Calu3 (cell line): ENCODE measurements at regions of chr6 and their contacts with region 1.

Region 1: GRCh38 chr6:133644892-133645619 is 243.9 kb upstream of the TCF21 start:
- DNase-seq: peak; percentile 4
- H3K4me3 Mint-ChIP-seq: no peak overlapping the region
- H3K27ac Mint-ChIP-seq: peak overlapping the region; percentile 54
- H3K4me1 Mint-ChIP-seq: peaks cover 24% of the 10 kb centered on the region
- H3K27me3 Mint-ChIP-seq: no peaks in the 10 kb centered on the region
- CTCF ChIP-seq: no peak

Region 2: DNA sequence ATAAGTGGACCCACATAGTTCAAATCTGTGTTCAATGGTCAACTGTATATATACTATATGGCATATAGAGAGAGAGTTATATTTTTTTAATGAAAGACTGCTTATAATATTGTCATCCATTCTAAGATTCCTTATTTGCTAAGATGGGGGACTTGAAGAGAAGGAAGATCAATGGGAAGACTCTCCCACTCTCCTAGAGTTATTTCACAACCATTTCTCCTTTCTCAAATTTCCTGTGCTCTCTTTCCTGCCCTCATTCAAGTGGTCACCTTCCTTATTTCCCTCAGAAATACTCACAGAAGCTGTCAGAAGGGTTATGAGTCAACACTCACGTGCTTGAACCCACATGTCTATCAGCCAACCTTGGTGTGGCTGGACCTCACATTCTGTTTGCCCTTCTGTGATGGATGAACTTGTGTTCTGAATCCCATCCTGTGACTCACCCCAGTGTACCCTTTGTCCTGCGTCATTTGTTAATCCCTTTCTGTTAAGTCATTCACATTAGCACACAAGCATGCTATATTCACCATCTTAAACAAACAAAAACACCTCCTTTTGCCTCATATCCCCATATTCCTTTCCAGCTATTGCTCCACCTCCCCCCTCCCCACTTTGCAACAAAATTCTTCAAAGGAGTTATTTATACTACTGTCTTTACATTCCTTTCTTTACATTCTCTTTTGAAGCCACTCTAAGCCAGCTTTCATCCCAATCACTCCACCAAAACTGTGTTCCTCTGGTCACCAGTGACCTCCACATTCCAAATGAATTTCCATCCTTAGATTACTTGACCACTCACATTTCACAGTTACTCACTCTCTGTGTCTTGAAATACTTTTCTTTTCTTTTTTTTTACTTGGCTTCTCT is 35.4 kb before region 1 on chr6:
- CTCF ChIA-PET with region 1: no interaction called
- intact Hi-C with region 1: no loop called
- DNase-seq: peak; percentile 77
- H3K4me3 Mint-ChIP-seq: no peak overlapping the region
- H3K27ac Mint-ChIP-seq: no peak overlapping the region
- H3K4me1 Mint-ChIP-seq: no peaks in the 10 kb centered on the region
- H3K27me3 Mint-ChIP-seq: no peaks in the 10 kb centered on the region
- CTCF ChIP-seq: no peak

Region 3: GRCh38 chr6:133748628-133749027 is 103.6 kb after region 1 on chr6:
- CTCF ChIA-PET with region 1: interaction called, 8 read pairs
- intact Hi-C with region 1: loop called (anchors 5 kb)
- DNase-seq: no peak
- H3K4me3 Mint-ChIP-seq: no peak overlapping the region
- H3K27ac Mint-ChIP-seq: no peak overlapping the region
- H3K4me1 Mint-ChIP-seq: peaks cover 25% of the 10 kb centered on the region
- H3K27me3 Mint-ChIP-seq: no peaks in the 10 kb centered on the region
- CTCF ChIP-seq: no peak

Region 4: DNA sequence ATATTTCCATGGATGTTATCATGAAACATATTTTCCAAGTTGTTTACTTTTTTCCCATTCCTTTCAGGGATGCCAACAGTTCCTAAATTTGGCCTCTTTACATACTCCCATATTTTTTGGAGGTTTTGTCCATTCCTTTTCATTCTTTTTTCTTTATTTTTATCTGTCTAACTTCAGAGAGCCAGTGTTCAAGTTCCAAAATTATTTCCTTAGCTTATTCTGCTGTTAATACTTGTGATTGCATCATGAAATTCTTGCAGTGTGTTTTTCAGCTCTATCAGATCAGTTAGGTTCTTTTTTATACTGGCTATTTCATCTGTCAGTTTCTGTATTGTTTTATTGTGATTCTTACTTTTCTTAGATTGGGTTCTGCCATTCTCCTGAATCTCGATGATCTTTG is 154.0 kb after region 1 on chr6:
- CTCF ChIA-PET with region 1: interaction called, 12 read pairs
- intact Hi-C with region 1: no loop called
- DNase-seq: no peak
- H3K4me3 Mint-ChIP-seq: no peak overlapping the region
- H3K27ac Mint-ChIP-seq: no peak overlapping the region
- H3K4me1 Mint-ChIP-seq: no peaks in the 10 kb centered on the region
- H3K27me3 Mint-ChIP-seq: no peaks in the 10 kb centered on the region
- CTCF ChIP-seq: no peak

Region 5: DNA sequence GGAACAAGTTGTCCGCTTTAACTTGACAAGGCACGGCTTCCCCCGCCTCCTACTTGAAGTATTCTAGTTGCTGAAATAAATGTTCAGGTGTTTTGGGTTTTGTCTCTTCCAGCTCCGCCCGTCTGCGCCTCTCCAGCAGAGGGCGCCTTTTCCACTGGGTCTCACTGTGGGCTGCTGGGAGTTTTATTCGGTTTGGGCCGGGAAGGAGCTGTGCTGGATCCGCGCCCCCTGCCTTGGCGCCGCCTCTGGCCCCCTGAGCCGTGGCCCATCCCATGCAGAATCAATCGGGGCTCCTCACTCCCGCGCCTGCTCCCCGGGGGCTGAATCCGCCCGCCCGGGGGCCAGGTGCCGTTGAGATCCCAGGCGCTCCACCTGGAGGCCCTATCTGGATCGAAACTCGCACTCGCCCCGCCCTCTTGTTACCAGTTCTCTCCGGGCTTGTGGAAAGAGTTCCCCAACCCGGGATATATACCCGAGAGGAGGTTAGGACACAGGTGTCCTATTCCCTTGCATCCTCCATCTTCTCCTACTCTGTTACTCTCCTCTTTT is 192.8 kb after region 1 on chr6:
- CTCF ChIA-PET with region 1: interaction called, 4 read pairs
- intact Hi-C with region 1: loop called (anchors 10 kb)
- DNase-seq: peak; percentile 86
- H3K4me3 Mint-ChIP-seq: peak overlapping the region; percentile 87
- H3K27ac Mint-ChIP-seq: peak overlapping the region; percentile 70
- H3K4me1 Mint-ChIP-seq: peaks cover 7% of the 10 kb centered on the region
- H3K27me3 Mint-ChIP-seq: no peaks in the 10 kb centered on the region
- CTCF ChIP-seq: peak; percentile 93

Region 6: DNA sequence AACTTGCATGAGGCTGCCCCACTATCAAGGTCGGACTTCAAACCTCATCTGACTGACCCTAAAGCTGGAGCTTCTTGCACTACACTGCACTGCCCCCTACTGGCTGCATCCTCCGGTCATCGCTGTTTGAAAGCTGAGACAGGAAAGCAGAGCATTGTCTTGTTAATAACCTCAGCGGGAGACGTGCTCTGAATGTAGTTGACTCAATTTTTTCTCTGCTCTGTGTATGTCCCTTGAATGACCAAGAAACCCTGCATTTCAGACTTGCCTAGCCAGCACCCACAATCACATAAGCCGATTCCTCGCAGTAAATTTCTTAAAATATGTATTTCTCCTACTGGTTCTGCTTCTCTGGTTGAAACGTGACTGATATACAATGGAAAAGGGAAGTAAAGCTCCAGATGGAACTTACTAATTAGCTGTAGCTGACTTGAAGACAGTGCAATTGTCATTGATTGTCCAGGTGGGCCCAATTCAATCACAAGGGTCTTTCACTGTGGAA is 271.6 kb after region 1 on chr6:
- CTCF ChIA-PET with region 1: no interaction called
- intact Hi-C with region 1: loop called (anchors 5 kb)
- DNase-seq: peak; percentile 92
- H3K4me3 Mint-ChIP-seq: no peak overlapping the region
- H3K27ac Mint-ChIP-seq: no peak overlapping the region
- H3K4me1 Mint-ChIP-seq: no peaks in the 10 kb centered on the region
- H3K27me3 Mint-ChIP-seq: no peaks in the 10 kb centered on the region
- CTCF ChIP-seq: peak; percentile 85